Transverse colon (tissue), 4 donors: ENCODE measurements at regions of chr14 and their contacts with region 1.

Region 1: DNA sequence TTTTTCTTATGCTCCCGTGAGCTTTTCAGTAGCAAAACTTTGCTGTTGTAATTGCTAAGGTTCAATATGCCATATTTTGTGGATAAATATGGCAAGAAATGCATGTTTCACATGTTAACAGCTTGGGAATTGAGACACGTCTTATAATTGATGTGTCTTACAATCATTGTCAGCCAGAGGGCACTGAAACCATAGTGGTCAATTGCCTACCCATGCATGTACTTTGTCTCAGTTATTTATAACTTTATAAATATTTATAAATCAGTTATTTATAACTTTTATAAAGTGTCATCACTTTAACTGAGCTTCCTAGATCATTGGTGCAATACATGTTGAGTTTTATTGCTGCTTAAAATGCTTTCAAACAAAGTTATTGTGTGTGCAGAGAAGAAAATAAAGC is 82.0 kb downstream of the CATSPERB start:
- DNase-seq: no peak
- H3K4me3 ChIP-seq: no peak overlapping the region
- H3K27ac ChIP-seq: no peak overlapping the region
- H3K4me1 ChIP-seq: peaks cover 0 to 8% (median 0%) of the 10 kb centered on the region in 4 donors
- H3K27me3 ChIP-seq: no peaks in the 10 kb centered on the region
- CTCF ChIP-seq: peak; percentile 47 to 83 (median 59)
- EP300 ChIP-seq: no peak
- POLR2A ChIP-seq: no peak

Region 2: DNA sequence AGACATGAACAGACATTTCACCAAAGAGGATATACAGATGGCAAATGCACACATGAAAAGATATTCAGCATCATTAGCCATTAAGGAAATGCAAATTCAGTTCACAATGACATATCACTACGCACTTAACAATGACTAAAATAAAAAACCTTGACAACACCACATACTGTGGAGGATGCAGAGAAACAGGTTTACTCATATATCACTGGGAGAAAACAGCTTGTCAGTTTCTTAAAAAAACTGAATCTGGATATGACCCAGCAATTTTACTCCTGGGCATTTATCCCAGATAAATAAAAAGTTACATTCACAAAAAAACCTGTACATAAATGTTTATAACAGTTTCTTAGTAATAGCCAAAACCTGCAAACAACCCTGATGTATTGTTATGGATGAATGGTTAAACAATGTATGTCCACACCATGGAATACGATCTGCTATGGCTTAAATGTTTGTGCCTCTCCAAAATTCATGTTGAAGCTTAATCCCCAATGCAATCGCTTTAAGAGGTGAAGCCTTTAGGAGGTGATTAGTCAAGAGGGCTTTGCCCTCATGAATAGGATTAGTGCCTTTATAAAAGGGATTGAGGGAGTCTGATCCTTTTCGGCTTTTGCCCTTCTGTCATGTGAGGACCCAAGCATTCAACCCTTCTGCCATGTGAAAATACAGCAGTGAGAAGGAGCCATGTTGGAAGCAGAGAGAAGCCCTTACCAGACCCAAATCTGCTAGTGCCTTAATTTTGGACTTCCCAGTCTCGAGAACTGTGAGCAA is 103.8 kb before region 1 on chr14:
- in situ Hi-C with region 1: no loop called
- intact Hi-C with region 1: no loop called
- DNase-seq: no peak
- H3K4me3 ChIP-seq: no peak overlapping the region
- H3K27ac ChIP-seq: no peak overlapping the region
- H3K4me1 ChIP-seq: no peaks in the 10 kb centered on the region
- H3K27me3 ChIP-seq: no peaks in the 10 kb centered on the region
- CTCF ChIP-seq: no peak
- EP300 ChIP-seq: no peak
- POLR2A ChIP-seq: no peak

Region 3: GRCh38 chr14:91786188-91786587 is 136.3 kb after region 1 on chr14:
- in situ Hi-C with region 1: no loop called
- intact Hi-C with region 1: no loop called
- DNase-seq: no peak
- H3K4me3 ChIP-seq: no peak overlapping the region
- H3K27ac ChIP-seq: no peak overlapping the region
- H3K4me1 ChIP-seq: no peaks in the 10 kb centered on the region
- H3K27me3 ChIP-seq: no peaks in the 10 kb centered on the region
- CTCF ChIP-seq: no peak
- EP300 ChIP-seq: no peak
- POLR2A ChIP-seq: no peak

Region 4: GRCh38 chr14:91901449-91902226 is 251.7 kb after region 1 on chr14:
- in situ Hi-C with region 1: loop called in 2 of 4 experiments (anchors 5 to 25 kb)
- intact Hi-C with region 1: no loop called
- DNase-seq: no peak
- H3K4me3 ChIP-seq: no peak overlapping the region
- H3K27ac ChIP-seq: peak overlapping the region in 3 of 4 donors; percentile 37 to 61 (median 47)
- H3K4me1 ChIP-seq: peaks cover 0 to 15% (median 8%) of the 10 kb centered on the region in 4 donors
- H3K27me3 ChIP-seq: no peaks in the 10 kb centered on the region
- CTCF ChIP-seq: no peak
- EP300 ChIP-seq: no peak
- POLR2A ChIP-seq: no peak

Region 5: DNA sequence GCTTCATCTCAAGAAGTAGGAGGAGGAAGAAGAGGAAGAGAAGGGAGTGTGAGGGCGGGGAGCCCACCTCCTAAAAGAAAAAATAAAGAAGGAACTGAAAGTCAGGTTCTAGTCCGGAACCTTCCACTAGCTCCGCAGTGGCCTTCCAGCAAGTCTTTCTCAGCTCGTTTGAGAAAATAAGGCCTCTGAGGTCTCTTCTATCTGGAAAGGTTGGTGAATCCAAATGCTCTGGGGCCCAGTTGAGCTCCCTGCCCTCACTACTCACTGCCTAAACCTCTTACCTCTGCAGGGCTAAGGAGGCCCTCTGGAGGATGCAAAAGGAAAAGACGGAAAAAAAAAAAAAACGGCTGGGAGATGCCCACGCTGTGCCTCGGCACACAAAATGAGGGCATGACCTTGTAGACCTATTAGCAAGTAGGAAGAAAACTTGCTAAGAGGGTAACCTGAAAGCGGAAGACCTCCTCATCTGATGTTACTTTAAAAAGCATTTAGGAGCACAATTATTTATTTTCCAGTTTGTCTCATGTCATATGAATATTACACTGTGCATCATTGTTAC is 261.6 kb after region 1 on chr14:
- in situ Hi-C with region 1: loop called in 3 of 4 experiments (anchors 10 to 25 kb)
- intact Hi-C with region 1: loop called (anchors 10 kb)
- DNase-seq: peak; percentile 37
- H3K4me3 ChIP-seq: no peak overlapping the region
- H3K27ac ChIP-seq: peak overlapping the region in 1 of 4 donors; percentile 32
- H3K4me1 ChIP-seq: peaks cover 0 to 10% (median 3%) of the 10 kb centered on the region in 4 donors
- H3K27me3 ChIP-seq: no peaks in the 10 kb centered on the region
- CTCF ChIP-seq: peak; percentile 48 to 67 (median 50)
- EP300 ChIP-seq: no peak
- POLR2A ChIP-seq: no peak

Region 6: DNA sequence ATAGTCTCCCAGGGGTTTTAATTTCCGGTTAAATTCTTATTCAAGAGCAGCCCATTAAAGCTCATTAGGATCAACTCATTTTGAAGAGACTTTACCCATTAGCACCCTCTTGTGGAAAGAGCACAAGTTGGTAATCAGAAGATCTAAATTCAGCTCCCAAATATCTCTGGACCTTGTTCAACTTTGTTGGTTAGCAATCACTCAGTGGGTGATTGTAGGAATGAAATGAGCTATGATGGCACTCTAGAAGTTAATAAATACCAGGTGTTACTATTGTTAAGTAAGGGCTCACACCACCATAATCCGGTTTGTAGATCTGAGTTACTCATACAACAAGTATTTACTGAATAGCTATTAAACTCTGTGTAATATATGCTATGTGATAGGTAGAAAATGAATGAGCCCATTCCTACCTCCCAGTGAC is 347.0 kb after region 1 on chr14:
- in situ Hi-C with region 1: loop called in 1 of 4 experiments (anchors 10 kb)
- intact Hi-C with region 1: no loop called
- DNase-seq: no peak
- H3K4me3 ChIP-seq: no peak overlapping the region
- H3K27ac ChIP-seq: no peak overlapping the region
- H3K4me1 ChIP-seq: peaks cover 0 to 4% (median 2%) of the 10 kb centered on the region in 4 donors
- H3K27me3 ChIP-seq: no peaks in the 10 kb centered on the region
- CTCF ChIP-seq: peak; percentile 26 to 57 (median 49)
- EP300 ChIP-seq: no peak
- POLR2A ChIP-seq: no peak